Heart right ventricle (tissue), 16 donors: ENCODE measurements at regions of chr14 and their contacts with region 1.

Region 1: DNA sequence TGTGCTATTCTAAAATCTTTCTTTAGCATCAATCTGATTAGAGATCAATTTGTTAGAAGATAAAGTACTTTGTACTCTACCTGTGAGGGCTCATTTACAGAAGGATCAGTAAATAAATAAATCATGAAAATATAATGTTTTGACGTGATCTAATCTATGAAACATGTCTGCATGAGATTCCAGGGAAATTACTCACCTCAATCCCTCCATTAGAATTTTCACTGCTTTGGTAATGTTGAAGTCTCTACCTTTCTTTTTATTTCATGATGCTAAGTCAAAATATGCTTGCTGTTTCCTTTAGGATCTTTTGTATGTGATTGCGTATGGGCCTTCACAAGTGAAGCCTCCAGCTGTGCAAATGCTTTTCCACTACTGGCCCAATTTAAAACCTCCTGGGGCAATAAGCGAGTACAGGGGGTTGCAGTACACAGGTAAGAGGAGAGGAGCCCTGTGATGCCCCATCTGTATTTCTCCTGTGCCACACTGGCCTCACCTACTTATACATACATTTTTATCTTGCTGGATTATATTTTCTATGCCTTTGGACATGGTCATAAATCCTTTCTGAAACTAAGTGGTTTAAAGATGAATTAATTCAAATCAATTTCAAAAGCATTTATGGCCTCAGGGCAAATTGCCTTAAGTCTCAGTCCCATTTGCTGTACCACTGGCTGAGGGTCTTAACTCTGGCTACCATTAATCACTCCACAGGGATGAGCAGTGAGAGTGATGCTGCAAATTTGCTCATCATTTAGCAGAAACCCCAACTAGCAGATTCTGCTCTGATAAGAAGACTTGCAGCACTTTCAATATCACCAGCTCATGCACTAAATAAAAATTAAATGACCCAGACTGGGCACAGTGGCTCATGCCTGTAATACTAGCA is 66.4 kb downstream of the UNC79 start:
- DNase-seq: no peak
- ATAC-seq: no peak
- H3K4me3 ChIP-seq: no peak overlapping the region
- H3K27ac ChIP-seq: no peak overlapping the region
- H3K4me1 ChIP-seq: no peaks in the 10 kb centered on the region
- H3K27me3 ChIP-seq: no peaks in the 10 kb centered on the region
- CTCF ChIP-seq: no peak

Region 2: DNA sequence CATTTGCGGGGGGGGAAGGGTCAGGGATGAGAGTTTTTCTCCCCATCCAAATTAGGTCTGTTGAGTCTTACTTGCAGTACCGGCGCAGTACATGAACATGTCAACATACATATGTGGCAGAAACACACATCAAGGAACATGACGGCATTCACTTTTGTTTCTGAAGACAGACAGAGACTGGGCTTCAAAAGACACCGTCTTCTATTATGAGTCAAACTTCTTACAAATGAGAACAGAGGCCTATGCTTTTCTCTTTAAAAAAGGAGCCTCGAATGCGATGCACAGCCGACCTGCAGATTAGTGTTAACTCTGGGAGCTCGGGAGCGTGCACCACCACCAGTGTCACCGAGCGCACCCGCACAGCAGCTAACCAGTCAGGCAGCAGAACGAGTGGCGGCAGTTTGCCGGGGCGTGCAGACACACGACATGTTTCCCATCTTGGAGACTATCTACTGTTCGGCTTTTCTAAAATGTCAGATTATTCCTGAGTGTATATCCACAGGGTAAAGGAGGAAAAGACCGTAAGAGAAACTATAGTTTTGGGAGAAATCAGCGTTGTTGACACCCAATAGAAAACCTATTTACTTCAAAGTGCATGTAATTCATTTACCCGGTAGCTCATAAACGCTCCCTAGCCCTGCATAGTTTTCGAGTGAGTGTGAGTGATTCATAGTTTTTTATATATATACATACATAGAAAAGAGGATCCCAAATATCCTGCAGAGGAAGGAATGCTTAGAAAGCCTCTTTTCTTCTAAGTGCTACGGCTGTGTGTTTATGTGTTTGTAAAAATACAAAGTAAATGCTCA is 257.0 kb before region 1 on chr14:
- intact Hi-C with region 1: no loop called
- DNase-seq: no peak
- ATAC-seq: no peak
- H3K4me3 ChIP-seq: no peak overlapping the region
- H3K27ac ChIP-seq: no peak overlapping the region
- H3K4me1 ChIP-seq: no peaks in the 10 kb centered on the region
- H3K27me3 ChIP-seq: no peaks in the 10 kb centered on the region
- CTCF ChIP-seq: no peak

Region 3: DNA sequence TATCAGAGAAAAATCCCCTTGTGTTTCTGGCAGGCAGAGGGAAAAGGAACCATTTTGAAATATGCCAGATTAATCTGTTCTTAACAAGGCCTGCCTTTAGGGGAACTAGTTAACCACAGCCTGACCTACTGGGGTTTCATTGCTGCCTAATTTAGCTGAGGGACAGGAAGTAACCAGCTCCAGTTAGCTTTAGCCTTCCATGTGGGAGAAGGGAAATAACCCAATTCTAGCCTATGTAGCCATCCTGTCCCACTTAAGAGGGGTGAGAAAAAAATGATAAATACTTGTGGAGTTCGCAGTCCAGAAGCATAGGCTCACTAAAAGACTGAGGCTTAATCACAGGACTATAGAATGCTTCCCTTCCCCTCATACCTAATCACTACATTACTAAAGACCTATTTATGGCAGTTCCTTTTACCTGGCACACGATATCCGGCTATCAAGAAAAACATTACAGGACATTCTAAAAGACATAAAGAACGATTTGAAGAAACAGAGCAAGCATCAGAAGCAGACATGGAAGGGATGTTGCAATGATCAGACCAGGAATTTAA is 127.3 kb before region 1 on chr14:
- intact Hi-C with region 1: loop called in 1 of 10 experiments (anchors 10 kb)
- DNase-seq: no peak
- ATAC-seq: no peak
- H3K4me3 ChIP-seq: no peak overlapping the region
- H3K27ac ChIP-seq: no peak overlapping the region
- H3K4me1 ChIP-seq: peaks cover 0 to 9% (median 0%) of the 10 kb centered on the region in 9 donors
- H3K27me3 ChIP-seq: no peaks in the 10 kb centered on the region
- CTCF ChIP-seq: no peak